ENCODE measurements at regions of chr2 and their contacts with region 1.

Region 1: GRCh38 chr2:226984750-226985582 is 149.1 kb downstream of the RHBDD1 start:
- DNase-seq: peak; percentile 77
- H3K4me3 Mint-ChIP-seq: no peak overlapping the region
- H3K27ac Mint-ChIP-seq: no peak overlapping the region
- H3K4me1 Mint-ChIP-seq: peaks cover 26% of the 10 kb centered on the region
- H3K27me3 Mint-ChIP-seq: no peaks in the 10 kb centered on the region

Region 2: DNA sequence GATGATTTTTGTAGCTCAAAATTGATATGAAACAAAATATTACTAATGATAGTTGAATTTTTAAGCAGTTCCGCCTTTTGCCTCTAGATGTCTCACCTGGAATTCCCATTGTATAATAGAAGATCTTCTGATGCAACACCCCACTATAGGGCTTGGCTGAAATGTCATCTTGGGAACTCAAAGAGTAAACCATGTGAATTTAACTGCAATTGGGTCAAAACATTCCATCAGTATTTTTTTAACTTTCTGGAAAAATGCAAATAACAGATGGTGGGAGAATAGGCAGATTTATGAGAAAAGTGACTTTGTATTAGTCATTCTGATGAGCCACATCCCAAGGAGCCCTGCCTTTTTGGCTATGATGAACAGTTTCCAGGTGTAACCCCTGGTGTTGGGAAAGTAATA is 1095.5 kb before region 1 on chr2:
- intact Hi-C with region 1: loop called (anchors 2 kb)
- DNase-seq: no peak
- H3K4me3 Mint-ChIP-seq: no peak overlapping the region
- H3K27ac Mint-ChIP-seq: no peak overlapping the region
- H3K4me1 Mint-ChIP-seq: no peaks in the 10 kb centered on the region
- H3K27me3 Mint-ChIP-seq: peaks cover 4% of the 10 kb centered on the region

Region 3: DNA sequence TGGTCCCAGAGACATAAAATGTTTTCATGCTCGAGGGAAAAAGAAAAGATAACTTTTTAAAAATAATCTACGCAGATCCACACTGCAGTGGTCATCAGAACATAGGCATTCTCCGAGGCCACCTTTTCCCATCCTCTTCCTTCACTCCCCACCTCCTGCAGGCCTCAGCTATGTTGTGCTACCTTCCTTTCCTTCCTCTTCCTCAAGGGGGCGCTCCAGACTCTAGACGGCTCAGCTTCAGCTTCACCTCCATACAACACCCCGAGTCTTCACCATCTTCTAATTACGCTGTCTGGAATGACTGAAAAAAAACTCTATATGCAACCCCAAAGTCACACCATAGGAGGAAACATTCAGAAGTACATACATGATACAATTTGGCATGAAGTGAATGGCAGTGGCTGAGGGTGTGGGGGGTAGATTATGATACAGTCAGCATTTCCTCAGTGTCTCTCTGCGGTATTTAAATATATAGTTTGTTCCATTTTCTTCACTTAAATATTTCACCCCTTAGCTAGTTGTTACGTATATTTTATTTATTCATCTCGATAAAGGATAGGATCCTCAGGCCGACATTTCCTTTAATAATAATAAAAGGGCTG is 769.0 kb before region 1 on chr2:
- intact Hi-C with region 1: loop called (anchors 1 kb)
- DNase-seq: peak; percentile 89
- H3K4me3 Mint-ChIP-seq: no peak overlapping the region
- H3K27ac Mint-ChIP-seq: no peak overlapping the region
- H3K4me1 Mint-ChIP-seq: peaks cover 4% of the 10 kb centered on the region
- H3K27me3 Mint-ChIP-seq: peaks cover 7% of the 10 kb centered on the region

Region 4: GRCh38 chr2:226423498-226423960 is 561.4 kb before region 1 on chr2:
- intact Hi-C with region 1: loop called (anchors 10 kb)
- DNase-seq: peak; percentile 87
- H3K4me3 Mint-ChIP-seq: peak overlapping the region; percentile 54
- H3K27ac Mint-ChIP-seq: peak overlapping the region; percentile 23
- H3K4me1 Mint-ChIP-seq: peaks cover 16% of the 10 kb centered on the region
- H3K27me3 Mint-ChIP-seq: peaks cover 25% of the 10 kb centered on the region

Region 5: GRCh38 chr2:226835796-226836547 is 149.0 kb before region 1 on chr2 and contains the start of gene RHBDD1:
- intact Hi-C with region 1: loop called (anchors 1 kb)
- DNase-seq: peak; percentile 98
- H3K4me3 Mint-ChIP-seq: peak within 1 kb of the TSS; percentile 95
- H3K27ac Mint-ChIP-seq: peak within 1 kb of the TSS; percentile 97
- H3K4me1 Mint-ChIP-seq: peaks cover 54% of the 10 kb centered on the region
- H3K27me3 Mint-ChIP-seq: no peaks in the 10 kb centered on the region
- total RNA-seq, gene RHBDD1: 41.3 and 44.7 TPM in 2 replicates